PC-9 (cell line): ENCODE measurements at regions of chr7 and their contacts with region 1.

Region 1: GRCh38 chr7:116834815-116835533 is 27.4 kb upstream of the CAPZA2 start:
- DNase-seq: peak in 1 of 2 experiments; percentile 49
- H3K4me3 ChIP-seq: no peak overlapping the region
- H3K27ac ChIP-seq: no peak overlapping the region
- H3K4me1 ChIP-seq: peaks cover 13% of the 10 kb centered on the region; the same call in 1 of the 2 replicates
- H3K27me3 ChIP-seq: no peaks in the 10 kb centered on the region
- CTCF ChIP-seq: no peak

Region 2: GRCh38 chr7:116340943-116341907 is 493.7 kb before region 1 on chr7:
- CTCF ChIA-PET with region 1: no interaction called
- POLR2A ChIA-PET with region 1: interaction called, 10 read pairs
- intact Hi-C with region 1: no loop called
- DNase-seq: no peak
- H3K4me3 ChIP-seq: no peak overlapping the region
- H3K27ac ChIP-seq: no peak overlapping the region
- H3K4me1 ChIP-seq: peaks cover 9% of the 10 kb centered on the region; the same call in 1 of the 2 replicates
- H3K27me3 ChIP-seq: no peaks in the 10 kb centered on the region
- CTCF ChIP-seq: no peak

Region 3: GRCh38 chr7:116862234-116862950 is 27.4 kb after region 1 on chr7 and contains the start of gene CAPZA2:
- CTCF ChIA-PET with region 1: no interaction called
- POLR2A ChIA-PET with region 1: no interaction called
- intact Hi-C with region 1: loop called (anchors 1 kb)
- DNase-seq: peak; percentile 74 to 97
- H3K4me3 ChIP-seq: peak within 1 kb of the TSS; percentile 99
- H3K27ac ChIP-seq: peak within 1 kb of the TSS; percentile 53
- H3K4me1 ChIP-seq: peaks cover 37% of the 10 kb centered on the region
- H3K27me3 ChIP-seq: no peaks in the 10 kb centered on the region
- CTCF ChIP-seq: no peak
- total RNA-seq, gene CAPZA2: 171 and 203 TPM in 2 replicates

Region 4: DNA sequence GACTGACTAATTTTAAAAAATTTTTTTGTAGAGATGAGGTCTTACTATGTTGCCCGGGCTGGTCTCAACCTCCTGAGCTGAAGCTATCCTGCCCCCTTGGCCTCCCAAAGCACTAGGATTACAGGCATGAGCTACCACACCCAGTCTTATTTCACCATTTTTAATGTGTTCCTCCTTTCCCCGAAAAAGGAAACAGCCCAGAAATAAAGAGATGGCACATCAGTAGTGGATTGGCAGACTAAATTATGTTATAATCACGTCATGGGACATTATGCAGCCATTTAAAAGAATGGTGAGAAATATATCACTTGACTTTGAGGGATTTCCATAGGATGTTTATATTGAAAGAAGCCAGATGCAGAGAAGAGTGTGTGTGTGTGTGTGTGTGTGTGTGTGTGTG is 67.9 kb after region 1 on chr7:
- CTCF ChIA-PET with region 1: no interaction called
- POLR2A ChIA-PET with region 1: no interaction called
- intact Hi-C with region 1: no loop called
- DNase-seq: no peak
- H3K4me3 ChIP-seq: no peak overlapping the region
- H3K27ac ChIP-seq: no peak overlapping the region
- H3K4me1 ChIP-seq: no peaks in the 10 kb centered on the region
- H3K27me3 ChIP-seq: no peaks in the 10 kb centered on the region
- CTCF ChIP-seq: no peak

Region 5: DNA sequence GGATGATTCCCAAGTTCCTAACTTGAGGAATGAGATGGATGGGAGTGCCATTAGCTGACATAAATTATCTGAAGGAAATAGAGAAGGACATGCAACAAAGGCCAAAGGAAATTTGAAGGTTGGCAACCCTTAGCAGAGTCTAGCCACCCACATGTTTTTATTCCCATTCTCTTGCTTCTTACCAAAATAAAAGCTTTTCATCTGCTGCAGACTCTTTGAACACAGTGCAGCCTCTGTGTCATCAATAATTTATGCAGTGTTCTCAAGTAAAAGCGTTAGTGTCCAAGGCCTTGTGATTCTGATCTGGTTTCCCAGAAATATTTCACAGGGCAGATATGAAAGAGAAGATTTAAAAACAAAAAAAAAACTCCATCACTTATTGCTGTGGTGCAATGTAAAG is 216.8 kb after region 1 on chr7:
- CTCF ChIA-PET with region 1: no interaction called
- POLR2A ChIA-PET with region 1: no interaction called
- intact Hi-C with region 1: no loop called
- DNase-seq: no peak
- H3K4me3 ChIP-seq: no peak overlapping the region
- H3K27ac ChIP-seq: no peak overlapping the region
- H3K4me1 ChIP-seq: no peaks in the 10 kb centered on the region
- H3K27me3 ChIP-seq: no peaks in the 10 kb centered on the region
- CTCF ChIP-seq: no peak

Region 6: DNA sequence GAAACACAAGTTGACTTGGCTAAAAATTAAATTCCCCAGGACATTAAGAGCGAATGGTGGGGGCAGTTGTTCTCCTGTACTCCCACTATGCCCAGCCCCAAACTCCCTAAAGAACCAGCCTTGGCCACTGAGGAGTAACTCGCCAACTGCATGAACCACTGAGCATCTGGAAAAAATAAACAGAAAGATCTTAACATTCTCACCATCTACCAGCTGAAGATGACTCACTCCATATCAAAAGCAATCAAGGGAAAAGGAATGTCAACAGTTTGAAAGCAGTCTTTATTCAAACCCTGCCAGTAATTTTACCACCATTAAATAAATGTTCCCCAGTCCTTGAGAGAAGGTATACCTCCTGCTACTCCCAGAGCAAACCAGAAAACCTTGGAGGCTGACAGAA is 992.9 kb after region 1 on chr7:
- CTCF ChIA-PET with region 1: no interaction called
- POLR2A ChIA-PET with region 1: no interaction called
- intact Hi-C with region 1: no loop called
- DNase-seq: peak; percentile 15 to 38
- H3K4me3 ChIP-seq: no peak overlapping the region
- H3K27ac ChIP-seq: no peak overlapping the region
- H3K4me1 ChIP-seq: no peaks in the 10 kb centered on the region
- H3K27me3 ChIP-seq: no peaks in the 10 kb centered on the region
- CTCF ChIP-seq: no peak